Activated CD4-positive, alpha-beta T cell treated with anti-CD3 and anti-CD28 coated beads, Interleukin-2, amount 10 ng/mL, durations not matched to agents 24 days and 14 days (primary cell): ENCODE measurements at regions of chr16 and their contacts with region 1.

Region 1: GRCh38 chr16:30922960-30923535 is 324 bp upstream of the FBXL19 start:
- DNase-seq: peak; percentile 99
- H3K4me3 Mint-ChIP-seq: peak overlapping the region; percentile 100
- H3K27ac Mint-ChIP-seq: peak overlapping the region; percentile 100
- H3K4me1 Mint-ChIP-seq: peaks cover 29% of the 10 kb centered on the region
- H3K27me3 Mint-ChIP-seq: no peaks in the 10 kb centered on the region

Region 2: GRCh38 chr16:30698139-30698815 is 224.8 kb before region 1 on chr16:
- intact Hi-C with region 1: loop called (anchors 1 kb)
- DNase-seq: peak; percentile 100
- H3K4me3 Mint-ChIP-seq: peak overlapping the region; percentile 97
- H3K27ac Mint-ChIP-seq: peak overlapping the region; percentile 100
- H3K4me1 Mint-ChIP-seq: peaks cover 34% of the 10 kb centered on the region
- H3K27me3 Mint-ChIP-seq: no peaks in the 10 kb centered on the region

Region 3: GRCh38 chr16:30797670-30798309 is 125.3 kb before region 1 on chr16:
- intact Hi-C with region 1: no loop called
- DNase-seq: no peak
- H3K4me3 Mint-ChIP-seq: no peak overlapping the region
- H3K27ac Mint-ChIP-seq: peak overlapping the region; percentile 34
- H3K4me1 Mint-ChIP-seq: peaks cover under 1% of the 10 kb centered on the region
- H3K27me3 Mint-ChIP-seq: peaks cover 2% of the 10 kb centered on the region

Region 4: DNA sequence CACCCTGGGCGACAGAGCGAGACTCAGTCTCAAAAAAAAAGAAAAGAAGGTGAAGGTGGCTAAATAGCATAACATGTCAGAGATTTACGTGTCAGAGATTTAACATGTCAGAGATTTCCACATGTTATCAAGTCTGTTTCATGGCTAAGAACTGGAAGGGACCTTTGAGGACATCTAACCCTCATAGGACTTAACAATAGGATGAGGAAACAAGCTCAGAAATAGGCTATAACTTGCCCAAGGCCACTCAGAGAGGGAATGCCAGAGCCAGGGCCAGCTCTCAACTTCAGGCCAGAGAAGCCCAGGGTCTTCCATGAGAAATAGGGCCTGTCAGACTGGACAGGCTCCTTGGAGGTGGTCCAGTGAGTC is 109.2 kb before region 1 on chr16:
- intact Hi-C with region 1: loop called (anchors 1 kb)
- DNase-seq: no peak
- H3K4me3 Mint-ChIP-seq: peak overlapping the region; percentile 96
- H3K27ac Mint-ChIP-seq: peak overlapping the region; percentile 84
- H3K4me1 Mint-ChIP-seq: peaks cover 10% of the 10 kb centered on the region
- H3K27me3 Mint-ChIP-seq: peaks cover 2% of the 10 kb centered on the region

Region 5: DNA sequence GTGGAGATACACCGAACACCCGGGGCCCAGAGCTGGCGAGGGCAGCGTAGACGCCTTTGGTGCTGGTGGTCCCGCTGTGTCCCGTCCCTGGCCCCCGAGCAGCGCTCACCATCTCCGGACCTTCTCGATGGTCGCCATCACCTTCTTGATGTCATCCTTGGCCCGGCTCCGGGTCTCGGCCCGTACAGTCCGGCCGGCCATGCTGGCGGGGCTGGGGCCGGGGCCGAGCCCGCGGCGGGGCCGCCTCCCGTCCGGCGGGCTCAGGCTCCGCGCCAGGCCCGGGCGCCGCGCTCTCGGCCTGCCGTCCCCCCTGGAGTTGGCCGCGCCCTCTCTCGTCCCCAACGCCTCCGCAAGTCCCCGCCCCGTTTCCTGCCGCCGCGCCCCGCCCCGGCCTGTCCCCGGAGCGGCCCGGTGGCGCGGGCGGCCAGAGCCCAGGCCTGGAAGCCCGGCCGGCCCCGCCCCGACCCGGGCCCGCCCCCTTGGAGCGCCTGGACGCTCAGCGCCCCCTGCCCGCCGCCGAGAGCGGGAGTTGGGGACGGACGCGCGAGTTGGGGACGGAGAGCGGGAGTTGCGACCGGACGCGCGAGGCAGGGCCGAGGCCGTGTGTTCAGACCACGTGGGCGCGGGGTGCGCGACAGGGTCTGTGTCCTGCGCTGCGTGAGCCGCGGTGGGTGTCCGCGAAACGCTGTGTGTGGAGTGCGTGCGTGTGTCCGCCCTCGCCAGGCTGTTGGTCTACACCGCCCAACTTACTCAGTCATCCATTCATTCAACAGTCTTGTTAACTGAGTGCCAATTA is 29.1 kb before region 1 on chr16 and contains the start of gene BCL7C:
- intact Hi-C with region 1: loop called (anchors 1 kb)
- DNase-seq: peak; percentile 96
- H3K4me3 Mint-ChIP-seq: peak within 1 kb of the TSS; percentile 94
- H3K27ac Mint-ChIP-seq: peak within 1 kb of the TSS; percentile 90
- H3K4me1 Mint-ChIP-seq: peaks cover 35% of the 10 kb centered on the region
- H3K27me3 Mint-ChIP-seq: no peaks in the 10 kb centered on the region
- total RNA-seq, gene BCL7C: 23.9 and 24.5 TPM in 2 replicates

Region 6: GRCh38 chr16:31032736-31033708 is 110.0 kb after region 1 on chr16 and contains the start of gene STX4:
- intact Hi-C with region 1: loop called (anchors 1 kb)
- DNase-seq: peak; percentile 99
- H3K4me3 Mint-ChIP-seq: peak within 1 kb of the TSS; percentile 93
- H3K27ac Mint-ChIP-seq: peak within 1 kb of the TSS; percentile 96
- H3K4me1 Mint-ChIP-seq: peaks cover 15% of the 10 kb centered on the region
- H3K27me3 Mint-ChIP-seq: no peaks in the 10 kb centered on the region
- total RNA-seq, gene STX4: 49.1 and 54.8 TPM in 2 replicates

Region 7: DNA sequence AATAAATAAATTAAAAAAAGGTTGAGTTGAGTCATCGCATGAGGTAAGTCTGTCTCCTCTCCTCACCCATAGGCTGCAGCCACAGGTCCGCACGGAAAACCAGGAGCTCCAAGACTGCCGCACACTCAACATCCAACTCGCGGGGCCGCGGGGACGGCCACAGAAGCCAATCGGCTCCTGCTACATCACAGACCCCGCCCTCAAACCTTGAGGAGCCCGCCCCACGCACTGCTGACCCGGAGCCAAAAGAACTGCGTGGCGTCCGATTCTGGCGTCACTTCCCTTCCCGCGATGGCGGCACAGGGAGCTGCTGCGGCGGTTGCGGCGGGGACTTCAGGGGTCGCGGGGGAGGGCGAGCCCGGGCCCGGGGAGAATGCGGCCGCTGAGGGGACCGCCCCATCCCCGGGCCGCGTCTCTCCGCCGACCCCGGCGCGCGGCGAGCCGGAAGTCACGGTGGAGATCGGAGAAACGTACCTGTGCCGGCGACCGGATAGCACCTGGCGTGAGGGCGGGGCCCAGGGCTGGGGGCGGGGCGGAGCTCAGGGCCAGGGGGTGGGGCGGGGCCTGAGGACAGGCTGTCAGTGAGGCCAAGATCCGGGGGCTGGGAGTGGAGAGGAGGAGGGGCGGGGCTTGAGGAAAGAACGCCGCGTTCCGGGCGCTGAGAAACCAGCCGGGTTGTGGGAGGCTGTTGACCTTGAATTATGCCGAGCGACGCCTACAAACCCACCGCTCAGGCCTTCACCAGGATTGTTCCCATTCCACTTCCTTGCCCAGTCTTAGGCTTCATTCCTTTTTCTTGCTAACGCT is 194.5 kb after region 1 on chr16 and contains the start of gene KAT8:
- intact Hi-C with region 1: loop called (anchors 1 kb)
- DNase-seq: peak; percentile 99
- H3K4me3 Mint-ChIP-seq: peak within 1 kb of the TSS; percentile 88
- H3K27ac Mint-ChIP-seq: peak within 1 kb of the TSS; percentile 89
- H3K4me1 Mint-ChIP-seq: peaks cover 11% of the 10 kb centered on the region
- H3K27me3 Mint-ChIP-seq: no peaks in the 10 kb centered on the region
- total RNA-seq, gene KAT8: 56.9 and 63.3 TPM in 2 replicates

Region 8: DNA sequence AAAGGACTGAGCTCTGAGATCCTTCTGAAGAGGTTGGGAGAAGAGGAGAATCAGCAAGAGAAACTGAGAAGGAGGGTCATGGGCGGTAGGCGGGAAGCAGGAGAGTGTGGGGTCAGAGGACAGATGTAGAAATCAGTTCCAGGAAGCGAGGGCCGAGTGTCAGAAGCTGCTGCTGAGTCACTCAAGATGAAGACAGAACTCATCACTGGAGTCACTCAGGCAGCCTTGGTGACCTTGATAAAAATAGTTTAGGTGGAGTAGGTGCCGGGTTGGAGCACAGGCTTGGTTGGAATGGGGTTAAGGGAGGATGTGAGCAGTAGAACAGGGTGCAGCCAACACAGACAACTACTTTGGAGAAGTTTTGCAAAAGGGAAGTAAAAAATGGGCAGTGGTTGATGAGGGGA is 330.6 kb after region 1 on chr16:
- intact Hi-C with region 1: no loop called
- DNase-seq: peak; percentile 84
- H3K4me3 Mint-ChIP-seq: peak overlapping the region; percentile 84
- H3K27ac Mint-ChIP-seq: peak overlapping the region; percentile 98
- H3K4me1 Mint-ChIP-seq: peaks cover 47% of the 10 kb centered on the region
- H3K27me3 Mint-ChIP-seq: no peaks in the 10 kb centered on the region